MCF 10A (cell line): ENCODE measurements at regions of chr2 and their contacts with region 1.

Region 1: DNA sequence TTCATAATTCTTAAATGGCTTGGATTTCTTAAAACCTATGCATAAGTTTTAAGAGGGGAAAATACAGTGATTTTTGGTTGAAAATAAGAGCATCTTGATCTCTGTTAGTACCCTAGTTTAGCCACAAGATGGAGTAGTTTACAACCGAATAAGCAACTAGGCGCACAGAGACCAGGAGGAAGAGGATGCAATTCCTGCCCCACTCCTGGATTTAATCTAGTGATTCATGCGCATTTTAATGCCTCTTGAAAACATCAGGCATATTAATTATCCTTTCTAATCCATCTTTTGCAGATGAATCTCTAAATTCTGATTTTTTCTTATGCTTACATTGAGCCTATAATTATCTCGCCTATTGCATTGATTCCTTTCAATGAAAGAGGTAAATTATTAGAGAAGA is 76.7 kb downstream of the MRPS9 start:
- DNase-seq: peak; percentile 72
- H3K4me3 Mint-ChIP-seq: no peak overlapping the region
- H3K27ac Mint-ChIP-seq: no peak overlapping the region
- H3K4me1 Mint-ChIP-seq: no peaks in the 10 kb centered on the region
- H3K27me3 Mint-ChIP-seq: no peaks in the 10 kb centered on the region
- CTCF ChIP-seq: peak; percentile 76

Region 2: GRCh38 chr2:105129722-105130232 is 15.2 kb after region 1 on chr2:
- CTCF ChIA-PET with region 1: interaction called, 14 read pairs
- POLR2A ChIA-PET with region 1: interaction called, 5 read pairs
- intact Hi-C with region 1: no loop called
- DNase-seq: no peak
- H3K4me3 Mint-ChIP-seq: no peak overlapping the region
- H3K27ac Mint-ChIP-seq: no peak overlapping the region
- H3K4me1 Mint-ChIP-seq: no peaks in the 10 kb centered on the region
- H3K27me3 Mint-ChIP-seq: peaks cover 32% of the 10 kb centered on the region
- CTCF ChIP-seq: no peak

Region 3: DNA sequence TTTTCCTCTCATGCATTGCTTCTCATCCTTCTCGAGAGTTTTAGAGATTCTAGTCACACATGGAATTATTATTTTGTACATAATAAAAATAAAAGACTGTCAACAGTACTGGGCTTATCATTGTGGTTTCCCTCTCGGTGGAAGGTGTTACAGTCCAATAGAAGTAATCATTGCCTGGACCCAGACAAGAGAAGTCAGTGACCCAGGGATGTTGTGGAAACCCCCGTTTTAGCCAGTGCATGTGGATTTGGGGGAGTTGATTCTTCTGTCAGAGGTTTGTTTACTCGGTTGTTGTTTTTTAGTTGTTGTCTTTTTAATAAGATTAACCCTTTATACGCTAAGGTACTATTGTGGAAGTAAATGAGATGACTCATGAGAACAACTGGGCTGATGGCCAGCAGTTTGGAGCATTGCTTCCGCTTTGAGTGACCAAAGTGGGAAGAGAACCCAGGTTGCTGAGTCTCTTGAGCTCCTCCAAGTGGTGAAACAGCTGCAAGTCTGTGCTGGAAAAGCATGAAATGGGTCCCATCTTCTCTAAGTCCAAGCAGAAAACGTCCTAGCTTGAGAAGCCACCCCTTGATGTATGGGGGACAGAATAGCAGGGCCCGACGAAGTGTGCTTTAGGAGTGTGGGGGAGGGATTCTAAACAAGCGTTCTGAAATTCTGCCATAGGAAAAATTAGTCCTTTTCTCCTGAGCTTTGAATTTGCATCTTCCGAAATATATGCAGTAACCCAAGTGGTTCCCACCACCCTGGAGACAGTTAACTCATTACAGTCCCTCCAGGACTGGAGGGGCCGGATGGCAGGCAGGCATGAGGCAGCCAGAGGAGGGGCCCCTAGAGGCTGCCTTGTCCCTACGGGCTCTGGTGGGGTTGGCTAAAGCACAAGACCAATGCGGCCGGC is 65.2 kb after region 1 on chr2:
- CTCF ChIA-PET with region 1: interaction called, 71 read pairs
- POLR2A ChIA-PET with region 1: interaction called, 3 read pairs
- intact Hi-C with region 1: loop called (anchors 1 kb)
- DNase-seq: peak; percentile 93
- H3K4me3 Mint-ChIP-seq: no peak overlapping the region
- H3K27ac Mint-ChIP-seq: no peak overlapping the region
- H3K4me1 Mint-ChIP-seq: peaks cover 5% of the 10 kb centered on the region
- H3K27me3 Mint-ChIP-seq: peaks cover 27% of the 10 kb centered on the region
- CTCF ChIP-seq: peak; percentile 47

Region 4: DNA sequence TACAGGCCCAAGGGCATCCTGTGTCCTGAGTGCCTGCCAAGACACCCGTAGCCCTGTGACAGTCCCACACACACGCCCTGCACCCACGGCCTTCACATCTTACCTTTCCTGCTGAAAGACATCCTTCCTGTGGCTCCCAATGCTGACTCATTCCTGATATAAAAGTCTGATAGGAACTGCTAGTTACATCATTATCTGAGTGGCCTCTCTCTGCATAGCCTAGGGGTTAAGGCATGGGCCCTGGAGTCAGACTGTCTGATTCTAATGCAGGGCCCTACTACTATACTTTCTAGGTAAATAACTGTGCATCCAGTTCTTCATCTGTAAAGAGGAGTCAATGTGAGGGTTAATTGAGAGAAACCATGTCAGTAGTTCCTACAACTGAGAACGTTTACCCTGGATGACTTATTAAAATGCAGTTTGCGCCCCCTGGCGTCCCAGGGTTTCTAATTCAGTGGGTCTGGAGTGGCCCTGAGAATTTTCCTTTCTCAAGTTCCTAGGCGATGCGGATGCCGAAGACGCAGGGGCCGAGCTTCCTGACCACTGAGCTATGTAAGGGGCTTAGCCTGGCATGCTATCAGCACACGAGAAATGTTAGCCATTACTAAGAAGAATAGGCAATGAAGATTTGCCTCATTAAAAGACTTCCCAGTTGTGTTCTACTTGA is 121.0 kb after region 1 on chr2:
- CTCF ChIA-PET with region 1: interaction called, 420 read pairs
- POLR2A ChIA-PET with region 1: interaction called, 3 read pairs
- intact Hi-C with region 1: loop called (anchors 1 kb)
- DNase-seq: peak; percentile 85
- H3K4me3 Mint-ChIP-seq: no peak overlapping the region
- H3K27ac Mint-ChIP-seq: no peak overlapping the region
- H3K4me1 Mint-ChIP-seq: peaks cover 12% of the 10 kb centered on the region
- H3K27me3 Mint-ChIP-seq: peaks cover under 1% of the 10 kb centered on the region
- CTCF ChIP-seq: peak; percentile 50